ENCODE measurements at regions of chr1 and their contacts with region 1.

Region 1: GRCh38 chr1:9201401-9202239 is 33.0 kb upstream of the H6PD start:
- DNase-seq: peak; percentile 86
- ATAC-seq: peak; percentile 74
- H3K4me3 ChIP-seq: peak overlapping the region; percentile 76
- H3K27ac ChIP-seq: peak overlapping the region; percentile 67
- H3K4me1 ChIP-seq: peaks cover 18% of the 10 kb centered on the region
- H3K27me3 ChIP-seq: no peaks in the 10 kb centered on the region; the same call in 1 of the 2 replicates
- CTCF ChIP-seq: no peak
- POLR2A ChIP-seq: peak; percentile 71
- RAD21 ChIP-seq: no peak

Region 2: DNA sequence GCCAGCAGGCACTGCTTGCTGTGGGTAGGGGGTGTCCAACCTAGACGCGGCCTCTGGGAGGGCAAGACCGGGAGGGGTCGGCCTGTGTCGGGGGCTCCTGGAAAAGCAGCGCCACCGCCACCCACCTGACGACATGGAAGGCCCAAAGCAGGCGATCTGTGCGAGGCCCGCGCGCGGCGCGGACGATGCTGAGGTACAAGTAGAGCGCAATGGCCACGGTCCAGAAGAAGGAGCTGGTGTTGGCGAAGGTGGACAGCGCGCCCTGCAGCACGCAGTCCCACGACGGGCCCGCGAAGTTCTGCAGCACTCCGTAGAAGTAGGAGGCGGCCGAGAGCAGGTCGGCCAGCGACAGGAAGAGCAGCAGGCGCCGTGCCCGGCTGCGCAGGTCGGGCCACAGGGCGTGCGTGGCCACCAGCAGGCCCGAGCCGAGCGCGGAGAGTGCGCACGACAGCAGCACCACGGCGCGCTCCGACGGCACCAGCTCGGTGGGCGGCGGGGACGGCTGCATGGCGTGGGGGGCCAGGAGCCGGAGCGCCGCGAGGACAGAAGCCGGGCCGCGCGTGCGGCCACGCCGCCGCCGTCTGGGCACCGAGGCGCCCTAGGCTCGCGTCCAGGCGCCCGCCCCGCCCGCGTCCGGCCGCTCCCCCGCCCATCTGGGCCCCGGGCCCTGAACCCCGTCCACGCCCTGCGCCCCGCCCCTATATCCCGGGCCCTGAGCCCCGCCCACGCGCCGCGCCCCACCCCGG is 72.9 kb before region 1 on chr1 and contains the start of gene GPR157:
- CTCF ChIA-PET with region 1: no interaction called
- POLR2A ChIA-PET with region 1: no interaction called
- dilution Hi-C with region 1: no loop called
- in situ Hi-C with region 1: no loop called
- intact Hi-C with region 1: loop called (anchors 5 kb)
- DNase-seq: peak; percentile 61
- ATAC-seq: peak; percentile 98
- H3K4me3 ChIP-seq: peak within 1 kb of the TSS; percentile 85
- H3K27ac ChIP-seq: peak within 1 kb of the TSS; percentile 45; the same call in 1 of the 2 replicates
- H3K4me1 ChIP-seq: peaks cover 12% of the 10 kb centered on the region
- H3K27me3 ChIP-seq: no peaks in the 10 kb centered on the region
- CTCF ChIP-seq: peak; percentile 12; the same call in 1 of the 2 replicates
- POLR2A ChIP-seq: no peak
- RAD21 ChIP-seq: no peak
- total RNA-seq, gene GPR157: 2.2 and 2.7 TPM in 2 replicates

Region 3: DNA sequence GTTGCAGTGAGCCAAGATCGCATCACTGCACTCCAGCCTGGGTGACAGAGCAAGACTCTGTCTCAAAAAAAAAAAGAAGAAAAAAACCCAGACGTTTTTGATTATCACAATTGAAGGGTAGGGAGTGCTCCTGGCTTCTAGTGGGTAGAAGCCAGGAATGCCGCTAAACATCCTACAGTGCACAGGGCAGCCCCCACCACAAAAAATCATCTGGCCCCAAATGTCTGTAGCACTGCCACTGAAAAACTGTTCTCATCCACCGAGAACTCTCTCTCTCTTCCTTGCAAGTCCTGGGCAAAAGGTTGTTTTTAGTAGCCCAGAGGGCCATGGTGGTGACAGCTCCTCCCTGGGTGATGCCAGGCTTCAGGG is 37.1 kb before region 1 on chr1:
- CTCF ChIA-PET with region 1: no interaction called
- POLR2A ChIA-PET with region 1: no interaction called
- dilution Hi-C with region 1: no loop called
- in situ Hi-C with region 1: no loop called
- intact Hi-C with region 1: no loop called
- DNase-seq: no peak
- ATAC-seq: no peak; the same call in 1 of the 2 replicates
- H3K4me3 ChIP-seq: no peak overlapping the region
- H3K27ac ChIP-seq: peak overlapping the region; percentile 13; the same call in 1 of the 2 replicates
- H3K4me1 ChIP-seq: peaks cover 30% of the 10 kb centered on the region
- H3K27me3 ChIP-seq: no peaks in the 10 kb centered on the region
- CTCF ChIP-seq: no peak
- POLR2A ChIP-seq: no peak
- RAD21 ChIP-seq: no peak

Region 4: DNA sequence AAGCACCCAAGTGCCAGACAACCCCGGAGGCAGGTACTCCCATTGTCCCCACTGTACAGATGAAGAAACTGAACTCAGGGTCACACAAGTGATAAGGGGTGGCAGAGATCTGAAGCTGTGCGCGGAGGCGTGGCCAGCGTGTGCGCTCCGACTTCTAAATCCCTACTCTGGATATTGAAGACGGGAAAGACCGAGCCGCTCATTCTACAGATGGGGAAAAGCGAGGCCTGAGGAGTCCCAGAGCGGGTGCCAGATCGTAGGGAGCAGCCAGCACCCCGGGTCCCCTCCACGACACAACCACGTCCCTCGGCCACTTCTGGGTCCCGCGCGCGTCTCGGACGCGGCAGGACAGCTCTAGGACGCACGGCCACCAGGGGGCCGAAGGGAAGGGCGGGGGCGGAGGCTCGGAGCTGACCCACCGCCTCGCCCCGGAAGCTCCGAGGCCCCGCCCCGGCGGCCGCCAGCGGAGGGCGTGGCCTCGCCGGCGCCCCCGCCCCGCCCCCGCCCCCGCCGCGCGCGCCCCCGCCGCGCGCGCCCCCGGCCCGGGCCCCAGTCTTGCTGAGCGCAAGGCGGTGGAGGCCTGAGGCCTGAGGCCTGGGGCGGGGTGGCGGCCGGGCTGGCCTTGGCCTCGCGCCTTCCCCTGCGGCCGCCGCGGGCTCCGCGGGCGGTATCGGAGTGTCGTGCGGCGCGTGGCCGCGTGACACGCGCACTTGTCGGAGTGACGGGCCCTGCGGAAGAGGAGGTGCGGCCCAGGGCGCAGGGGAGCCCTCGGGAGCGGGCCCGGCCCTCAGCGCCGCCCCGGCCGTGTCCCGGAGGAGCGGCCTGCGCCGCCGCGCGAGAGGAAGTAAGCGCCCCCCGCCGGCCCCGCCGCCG is 32.8 kb after region 1 on chr1 and contains the start of gene H6PD:
- CTCF ChIA-PET with region 1: interaction called, 8 read pairs
- POLR2A ChIA-PET with region 1: interaction called, 5 read pairs
- dilution Hi-C with region 1: no loop called
- in situ Hi-C with region 1: no loop called
- intact Hi-C with region 1: loop called (anchors 5 kb)
- DNase-seq: peak; percentile 75
- ATAC-seq: peak; percentile 92
- H3K4me3 ChIP-seq: peak within 1 kb of the TSS; percentile 95
- H3K27ac ChIP-seq: peak within 1 kb of the TSS; percentile 95
- H3K4me1 ChIP-seq: peaks cover 17% of the 10 kb centered on the region
- H3K27me3 ChIP-seq: no peaks in the 10 kb centered on the region
- CTCF ChIP-seq: peak; percentile 74
- POLR2A ChIP-seq: peak; percentile 94
- RAD21 ChIP-seq: peak; percentile 47
- total RNA-seq, gene H6PD: 8.3 and 9.3 TPM in 2 replicates

Region 5: GRCh38 chr1:9388335-9389180 is 186.9 kb after region 1 on chr1:
- CTCF ChIA-PET with region 1: no interaction called
- POLR2A ChIA-PET with region 1: interaction called, 14 read pairs
- dilution Hi-C with region 1: no loop called
- in situ Hi-C with region 1: no loop called
- intact Hi-C with region 1: no loop called
- DNase-seq: no peak
- ATAC-seq: peak; percentile 79
- H3K4me3 ChIP-seq: no peak overlapping the region
- H3K27ac ChIP-seq: no peak overlapping the region
- H3K4me1 ChIP-seq: peaks cover 2% of the 10 kb centered on the region; the same call in 1 of the 2 replicates
- H3K27me3 ChIP-seq: peaks cover 8% of the 10 kb centered on the region
- CTCF ChIP-seq: no peak
- POLR2A ChIP-seq: no peak
- RAD21 ChIP-seq: no peak